Heart left ventricle (tissue), 16 donors: ENCODE measurements at regions of chr20 and their contacts with region 1.

Region 1: GRCh38 chr20:47772995-47773716 is 12.1 kb downstream of the SULF2 start:
- DNase-seq: peak in 4 of 5 donors; percentile 28 to 75 (median 52)
- ATAC-seq: peak; percentile 69 to 80 (median 76)
- H3K4me3 ChIP-seq: no peak overlapping the region
- H3K27ac ChIP-seq: peak overlapping the region in 10 of 12 donors; percentile 11 to 74 (median 54)
- H3K4me1 ChIP-seq: peaks cover 0 to 56% (median 16%) of the 10 kb centered on the region in 12 donors
- H3K27me3 ChIP-seq: no peaks in the 10 kb centered on the region
- CTCF ChIP-seq: no peak
- POLR2A ChIP-seq: no peak

Region 2: DNA sequence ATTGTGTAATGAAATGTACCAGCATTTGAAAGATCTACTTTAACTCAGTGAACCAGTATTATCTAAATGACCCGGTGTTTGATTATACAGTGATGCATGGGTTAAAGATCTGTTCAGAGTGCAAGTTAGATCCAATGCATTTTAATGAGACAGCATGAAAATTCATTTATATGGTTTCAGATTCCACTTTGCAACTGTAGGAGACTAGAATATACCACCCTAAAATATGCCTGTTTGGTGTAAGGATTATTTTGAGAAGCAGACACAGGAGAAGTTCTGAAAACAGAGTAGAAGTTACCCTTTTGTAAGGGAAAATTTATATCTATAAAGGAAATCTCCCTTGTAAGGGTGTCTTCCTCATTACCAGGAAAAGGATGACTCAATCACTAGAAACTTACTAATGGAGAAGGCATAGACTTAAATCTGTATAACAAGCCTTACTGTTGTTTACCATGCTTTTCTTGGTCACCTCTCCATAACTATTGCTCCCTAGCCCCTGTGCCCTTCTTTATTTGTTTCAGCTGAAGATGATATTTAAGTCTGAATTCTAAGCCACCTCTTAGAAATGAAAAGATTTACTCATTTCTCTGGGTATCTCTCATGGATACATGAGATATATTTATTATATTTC is 166.1 kb before region 1 on chr20:
- intact Hi-C with region 1: no loop called
- DNase-seq: no peak
- ATAC-seq: no peak
- H3K4me3 ChIP-seq: no peak overlapping the region
- H3K27ac ChIP-seq: peak overlapping the region in 2 of 12 donors; percentile 15 to 59
- H3K4me1 ChIP-seq: peaks cover 0 to 68% (median 20%) of the 10 kb centered on the region in 12 donors
- H3K27me3 ChIP-seq: no peaks in the 10 kb centered on the region
- CTCF ChIP-seq: no peak
- POLR2A ChIP-seq: no peak

Region 3: GRCh38 chr20:47686545-47686944 is 86.6 kb before region 1 on chr20:
- intact Hi-C with region 1: loop called in 1 of 10 experiments (anchors 5 kb)
- DNase-seq: peak in 1 of 5 donors; percentile 13
- ATAC-seq: no peak
- H3K4me3 ChIP-seq: no peak overlapping the region
- H3K27ac ChIP-seq: no peak overlapping the region
- H3K4me1 ChIP-seq: peaks cover 0 to 17% (median 14%) of the 10 kb centered on the region in 12 donors
- H3K27me3 ChIP-seq: no peaks in the 10 kb centered on the region
- CTCF ChIP-seq: no peak
- POLR2A ChIP-seq: no peak

Region 4: DNA sequence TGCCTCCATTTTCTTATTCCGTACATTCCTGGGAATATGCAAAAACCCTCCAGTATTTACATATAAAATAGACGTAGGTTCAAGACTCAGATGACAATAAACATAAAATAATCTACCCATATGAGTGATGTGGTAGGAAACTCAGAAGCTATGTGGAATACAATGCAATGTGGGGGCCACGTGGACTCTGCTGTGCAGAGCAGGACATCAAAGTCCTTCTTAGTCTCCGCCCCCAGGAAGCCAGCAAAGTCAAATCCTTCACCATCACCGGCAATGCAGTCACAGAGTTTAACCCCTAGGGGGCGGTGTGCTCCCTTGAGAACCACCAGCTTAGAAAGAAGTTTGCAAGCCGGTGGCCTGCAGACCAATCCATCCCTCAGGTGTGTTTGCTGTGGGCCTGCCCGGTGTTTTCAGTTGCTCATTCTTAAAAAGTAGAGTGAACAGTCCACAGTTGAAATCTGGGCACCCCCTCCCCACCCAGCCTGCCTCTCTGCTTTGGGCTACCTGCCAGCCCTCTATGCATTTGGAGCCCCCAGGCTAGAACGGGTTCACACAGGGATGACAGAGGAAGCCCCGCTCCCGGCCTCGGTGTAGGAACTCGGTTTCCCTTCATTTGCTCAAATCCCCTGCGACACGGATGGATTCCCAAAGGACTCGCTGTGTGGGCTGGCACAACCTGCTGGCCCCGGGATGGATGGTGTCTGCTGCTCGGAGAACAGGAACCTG is 47.7 kb before region 1 on chr20:
- intact Hi-C with region 1: loop called in 2 of 10 experiments (anchors 5 kb)
- DNase-seq: peak; percentile 71 to 79 (median 77)
- ATAC-seq: peak in 3 of 4 donors; percentile 60 to 64 (median 61)
- H3K4me3 ChIP-seq: no peak overlapping the region
- H3K27ac ChIP-seq: no peak overlapping the region
- H3K4me1 ChIP-seq: peaks cover 0 to 26% (median 6%) of the 10 kb centered on the region in 12 donors
- H3K27me3 ChIP-seq: no peaks in the 10 kb centered on the region
- CTCF ChIP-seq: peak; percentile 77 to 91 (median 86)
- POLR2A ChIP-seq: no peak

Region 5: DNA sequence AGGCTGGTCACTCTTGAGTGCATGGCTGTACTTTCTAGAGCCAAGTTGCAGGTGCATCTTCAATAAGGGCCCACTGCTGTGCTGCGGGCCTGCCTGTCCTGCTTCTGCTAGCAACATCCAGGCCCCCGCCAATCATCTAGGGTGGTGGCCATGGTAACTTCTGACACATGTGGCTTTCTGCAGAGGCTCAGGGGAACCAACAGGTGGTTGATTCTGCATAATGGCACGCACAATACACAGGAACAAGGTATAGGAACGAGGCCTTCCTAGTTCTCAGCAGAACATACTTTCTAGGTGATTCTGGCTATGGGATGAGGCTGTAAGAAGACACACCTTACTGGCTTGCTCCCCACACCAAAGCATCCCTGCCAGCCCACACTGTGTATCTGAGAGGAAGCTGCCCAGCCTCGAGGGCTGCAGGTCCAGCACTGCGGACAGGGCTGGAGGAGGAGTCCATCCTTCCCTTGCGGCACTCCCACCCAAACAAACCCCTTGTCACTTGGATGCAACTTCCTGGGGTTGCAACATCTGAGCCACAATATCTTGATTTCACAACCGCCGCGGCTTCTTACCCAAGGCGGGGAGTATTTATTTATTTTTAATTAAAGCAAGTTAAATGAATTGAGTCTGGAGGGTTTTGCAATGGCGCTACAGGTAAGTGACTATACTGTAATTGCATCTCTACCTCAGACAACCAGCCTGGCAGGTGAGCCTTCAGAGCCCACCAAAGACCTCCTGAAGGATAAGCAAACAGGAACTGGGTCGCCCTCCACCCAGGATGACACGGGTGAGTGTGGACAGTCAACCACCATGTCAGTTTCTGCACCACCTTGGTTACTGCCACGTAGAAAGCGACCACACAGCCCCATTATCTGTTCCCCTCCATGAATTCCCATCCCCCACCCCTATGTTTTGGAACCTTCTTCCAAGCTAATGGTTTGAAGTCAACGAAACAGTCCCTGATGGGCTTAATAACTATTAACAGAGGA is 37.5 kb before region 1 on chr20:
- intact Hi-C with region 1: loop called in 2 of 10 experiments (anchors 5 kb)
- DNase-seq: peak; percentile 27 to 70 (median 48)
- ATAC-seq: peak; percentile 42 to 85 (median 73)
- H3K4me3 ChIP-seq: no peak overlapping the region
- H3K27ac ChIP-seq: no peak overlapping the region
- H3K4me1 ChIP-seq: peaks cover 0 to 16% (median 0%) of the 10 kb centered on the region in 12 donors
- H3K27me3 ChIP-seq: no peaks in the 10 kb centered on the region
- CTCF ChIP-seq: no peak
- POLR2A ChIP-seq: no peak